AG04449 (cell line): ENCODE measurements at regions of chr3 and their contacts with region 1.

Region 1: GRCh38 chr3:8416965-8417364 is 84.7 kb upstream of the LMCD1 start:
- DNase-seq: no peak
- H3K4me3 ChIP-seq: no peak overlapping the region
- CTCF ChIP-seq: no peak

Region 2: GRCh38 chr3:8239718-8240695 is 177.0 kb before region 1 on chr3:
- CTCF ChIA-PET with region 1: interaction called, 42 read pairs
- POLR2A ChIA-PET with region 1: no interaction called
- DNase-seq: peak; percentile 21
- H3K4me3 ChIP-seq: no peak overlapping the region
- CTCF ChIP-seq: peak; percentile 81

Region 3: DNA sequence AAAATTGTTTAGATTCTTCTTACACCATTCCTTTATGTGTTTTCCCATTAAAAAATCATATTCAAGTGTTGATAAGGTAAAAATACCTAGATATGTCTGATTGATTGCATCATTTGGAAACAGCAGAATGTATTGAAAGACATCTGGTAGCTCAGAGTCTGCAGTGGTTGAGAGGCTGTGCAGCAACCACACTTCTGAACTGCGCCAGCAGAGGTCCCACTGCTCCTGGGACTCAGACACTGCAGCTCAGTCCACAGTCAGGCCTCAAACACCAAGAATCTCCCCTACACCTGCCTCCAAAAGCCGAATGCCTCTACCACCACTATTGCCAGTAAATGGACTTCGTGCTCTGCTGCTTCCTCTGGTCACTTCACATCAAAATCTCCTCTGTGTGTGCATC is 92.2 kb before region 1 on chr3:
- CTCF ChIA-PET with region 1: interaction called, 171 read pairs
- POLR2A ChIA-PET with region 1: no interaction called
- DNase-seq: no peak
- H3K4me3 ChIP-seq: no peak overlapping the region
- CTCF ChIP-seq: peak; percentile 75

Region 4: GRCh38 chr3:8436718-8437184 is 19.8 kb after region 1 on chr3:
- CTCF ChIA-PET with region 1: interaction called, 30 read pairs
- POLR2A ChIA-PET with region 1: no interaction called
- DNase-seq: no peak
- H3K4me3 ChIP-seq: no peak overlapping the region
- CTCF ChIP-seq: no peak

Region 5: DNA sequence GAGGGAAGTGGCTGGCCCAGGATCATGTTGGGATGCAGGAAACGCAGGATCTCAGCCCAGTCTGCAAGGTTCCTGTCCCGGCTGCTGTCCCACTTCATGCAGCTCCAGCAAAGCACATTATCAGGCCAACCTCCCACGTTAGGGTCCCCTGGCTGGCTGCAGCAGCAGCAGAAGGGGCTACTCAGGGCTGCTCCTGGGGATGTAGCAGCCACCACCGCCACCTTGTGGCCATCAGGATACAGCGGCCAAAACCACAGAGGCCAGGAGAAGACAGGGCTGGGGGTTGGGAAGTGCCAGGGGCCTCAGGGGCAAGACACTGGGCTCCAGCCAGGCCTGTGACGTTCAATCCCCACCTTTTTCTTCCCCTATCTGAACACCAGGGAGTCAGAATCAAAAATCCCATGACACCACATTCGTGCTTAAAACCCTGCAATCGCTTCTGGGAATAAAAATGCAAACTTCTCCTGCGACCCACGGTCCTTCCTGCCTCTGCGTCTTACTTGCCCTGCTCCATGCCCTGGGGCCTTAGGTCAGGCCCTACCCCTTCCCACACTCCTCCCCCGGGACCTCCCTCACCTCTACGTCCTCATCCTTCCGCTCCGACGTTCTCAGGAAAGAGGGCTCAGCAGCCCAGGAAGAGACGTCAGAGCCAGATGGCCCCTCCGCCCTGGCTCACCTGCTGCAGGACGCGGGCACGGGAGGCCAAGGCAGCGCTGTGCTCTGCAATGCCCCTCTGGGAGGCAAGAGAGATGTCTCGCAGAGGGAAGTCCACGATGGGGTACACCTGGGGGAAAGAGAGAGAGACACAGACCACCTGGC is 206.1 kb after region 1 on chr3:
- CTCF ChIA-PET with region 1: interaction called, 14 read pairs
- POLR2A ChIA-PET with region 1: no interaction called
- DNase-seq: no peak
- H3K4me3 ChIP-seq: no peak overlapping the region
- CTCF ChIP-seq: peak; percentile 95